A549 (cell line): ENCODE measurements at regions of chr5 and their contacts with region 1.

Region 1: DNA sequence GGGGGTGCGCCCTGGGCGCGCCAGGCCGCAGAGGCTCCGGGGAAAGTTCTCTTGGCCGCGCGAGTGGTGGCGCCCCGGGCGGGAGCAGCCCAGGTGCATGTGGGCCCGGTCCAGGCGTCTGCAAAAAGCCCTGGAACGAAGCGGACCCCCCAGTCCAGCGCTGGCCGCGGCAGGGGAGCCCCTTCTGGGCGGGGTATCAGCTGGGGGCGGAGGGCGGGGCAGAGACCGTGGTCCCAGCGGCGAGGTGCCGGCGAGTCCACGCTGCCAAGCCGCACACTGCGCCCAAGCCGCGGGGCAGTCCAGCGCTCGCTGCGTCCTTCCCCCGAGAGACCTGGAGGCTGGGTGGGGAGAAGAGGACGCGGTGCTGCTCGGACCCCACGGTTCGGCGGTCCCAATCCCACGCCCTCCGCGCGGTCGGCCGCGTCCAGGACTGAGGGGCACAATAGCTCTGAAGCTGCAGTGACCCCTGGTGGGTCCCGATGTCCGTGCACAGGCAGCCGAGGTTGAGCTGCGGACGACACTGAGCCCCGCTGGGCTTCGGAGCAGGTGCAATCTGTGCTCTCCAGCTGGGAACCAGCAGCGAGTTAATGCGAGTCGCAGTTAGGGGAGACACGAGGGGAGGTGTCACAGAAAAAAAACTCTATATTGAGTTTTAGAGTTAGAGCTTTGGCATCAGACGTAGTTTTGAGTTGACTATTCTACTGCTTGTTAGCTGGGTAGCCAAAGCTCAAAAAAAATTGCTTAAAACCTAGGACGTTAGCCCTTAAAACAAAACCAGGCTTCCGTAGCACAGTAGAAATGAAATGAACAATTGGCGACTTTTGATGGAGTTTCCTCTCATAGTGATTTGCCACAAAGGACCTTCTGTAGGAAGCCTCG is 1.1 kb upstream of the EPB41L4A start:
- DNase-seq: peak; percentile 83 to 86
- ATAC-seq: peak; percentile 94 to 97
- H3K4me3 ChIP-seq: peak overlapping the region; percentile 64
- H3K27ac ChIP-seq: peak overlapping the region; percentile 64 to 80
- H3K4me1 ChIP-seq: peaks cover 6% of the 10 kb centered on the region; the same call in 1 of the 3 replicates
- CTCF ChIP-seq: peak; percentile 81
- EP300 ChIP-seq: no peak
- POLR2A ChIP-seq: no peak
- RAD21 ChIP-seq: peak; percentile 84 to 93

Region 2: DNA sequence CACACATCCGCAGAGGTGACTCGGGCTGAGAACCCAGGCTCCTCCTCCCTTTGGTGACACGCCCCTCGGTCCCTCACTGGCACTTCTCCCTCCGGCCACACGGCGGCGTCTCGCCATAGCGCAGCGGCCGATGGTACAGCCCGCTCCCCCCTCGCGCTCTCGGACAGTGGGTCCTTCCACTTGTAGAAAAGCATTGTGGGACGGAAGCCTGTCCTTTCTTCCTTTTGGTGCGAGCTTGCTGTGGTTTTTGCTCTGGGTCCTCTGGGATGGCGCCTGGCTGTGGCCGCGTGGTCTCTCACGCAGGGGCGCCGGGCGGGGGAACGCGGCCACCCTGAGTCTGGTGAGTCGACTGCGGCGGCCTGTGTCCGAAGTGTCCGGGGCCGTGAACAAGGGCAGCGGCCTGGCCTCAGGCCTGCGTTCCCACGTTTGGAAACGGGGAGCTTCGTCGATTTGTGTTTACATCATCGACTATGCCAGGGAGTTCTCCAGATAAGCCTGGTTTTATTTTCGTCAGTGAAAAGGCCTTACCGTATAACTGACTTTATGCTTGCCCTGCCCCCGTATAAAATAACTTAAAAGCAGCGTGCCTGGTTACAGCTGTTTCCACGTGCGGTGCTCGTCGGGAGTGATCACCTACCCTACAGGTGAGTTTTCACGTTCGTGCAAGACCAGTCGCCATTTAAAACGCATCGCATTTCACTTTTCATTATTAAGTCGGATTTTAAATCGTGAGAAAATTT is 259.4 kb before region 1 on chr5:
- CTCF ChIA-PET with region 1: interaction called, 3 read pairs
- POLR2A ChIA-PET with region 1: interaction called, 11 read pairs
- DNase-seq: peak; percentile 68 to 91
- ATAC-seq: peak; percentile 95 to 96
- H3K4me3 ChIP-seq: peak overlapping the region; percentile 95
- H3K27ac ChIP-seq: peak overlapping the region; percentile 82 to 98
- H3K4me1 ChIP-seq: peaks cover 23% of the 10 kb centered on the region
- CTCF ChIP-seq: peak; percentile 79
- EP300 ChIP-seq: no peak
- POLR2A ChIP-seq: peak; percentile 95
- RAD21 ChIP-seq: peak in 1 of 2 experiments; percentile 37; a peak in 2 of 5 replicates

Region 3: GRCh38 chr5:112174959-112175594 is 245.1 kb before region 1 on chr5:
- CTCF ChIA-PET with region 1: interaction called, 84 read pairs
- POLR2A ChIA-PET with region 1: no interaction called
- DNase-seq: peak; percentile 47 to 63
- ATAC-seq: peak; percentile 58 to 89; a peak in 5 of 6 replicates
- H3K4me3 ChIP-seq: no peak overlapping the region
- H3K27ac ChIP-seq: no peak overlapping the region
- H3K4me1 ChIP-seq: 0 out of 3 replicates have a peak, but pooled peaks cover 4% of the 10 kb centered on the region
- CTCF ChIP-seq: peak; percentile 88
- EP300 ChIP-seq: no peak
- POLR2A ChIP-seq: no peak
- RAD21 ChIP-seq: peak; percentile 77 to 79

Region 4: DNA sequence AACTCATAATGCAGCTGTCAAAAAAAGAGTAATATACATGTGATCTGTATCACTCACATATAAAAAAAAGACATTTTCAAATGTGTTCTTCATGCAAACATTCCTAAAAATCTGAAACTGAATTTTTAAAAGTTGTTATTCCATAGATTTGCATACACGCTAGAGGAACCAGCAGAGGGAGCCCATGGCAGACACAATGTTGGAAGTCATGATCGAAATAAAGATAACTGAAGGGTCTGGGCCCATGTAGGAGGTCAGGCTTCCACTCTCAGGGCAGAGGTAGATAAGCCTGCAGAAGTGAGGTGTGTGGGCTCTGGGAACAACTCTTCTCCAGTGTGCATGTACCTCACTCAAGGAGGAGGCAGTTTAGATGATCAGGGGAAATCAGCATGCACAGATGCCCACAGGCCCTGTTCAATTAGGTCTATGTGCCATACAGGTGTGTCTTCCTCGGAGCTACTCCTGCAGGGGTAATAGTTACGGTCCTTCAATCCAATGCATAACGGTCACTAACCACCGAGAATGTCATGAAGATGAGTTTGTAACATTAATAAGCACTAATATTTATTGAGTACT is 209.7 kb before region 1 on chr5:
- CTCF ChIA-PET with region 1: interaction called, 19 read pairs
- POLR2A ChIA-PET with region 1: no interaction called
- DNase-seq: peak; percentile 9 to 66
- ATAC-seq: peak; percentile 70 to 90; a peak in 5 of 6 replicates
- H3K4me3 ChIP-seq: no peak overlapping the region
- H3K27ac ChIP-seq: no peak overlapping the region
- H3K4me1 ChIP-seq: no peaks in the 10 kb centered on the region
- CTCF ChIP-seq: peak; percentile 76
- EP300 ChIP-seq: no peak
- POLR2A ChIP-seq: no peak
- RAD21 ChIP-seq: peak; percentile 80 to 82

Region 5: DNA sequence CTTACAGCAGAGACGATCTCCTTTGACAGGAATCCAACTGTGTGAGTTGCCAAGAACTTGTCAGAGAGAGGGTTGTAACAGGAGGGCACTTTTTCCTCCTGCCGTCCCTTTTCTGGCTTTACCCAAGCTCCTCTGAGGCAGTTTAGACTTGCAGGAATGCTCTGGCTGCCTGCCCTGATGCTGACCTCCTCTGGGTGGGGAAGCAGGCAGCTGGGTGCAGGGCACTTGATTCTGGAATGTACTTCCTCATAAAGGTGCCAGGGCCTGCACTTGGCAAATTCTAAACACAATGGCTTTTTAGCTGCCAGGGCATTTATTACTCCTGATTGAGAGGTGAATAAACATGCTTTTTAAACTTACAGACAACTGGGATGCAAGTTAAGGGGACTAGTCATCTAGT is 191.6 kb before region 1 on chr5:
- CTCF ChIA-PET with region 1: interaction called, 10 read pairs
- POLR2A ChIA-PET with region 1: no interaction called
- DNase-seq: peak; percentile 73 to 90
- ATAC-seq: peak; percentile 97 to 98
- H3K4me3 ChIP-seq: no peak overlapping the region; the same call in 2 of the 3 replicates
- H3K27ac ChIP-seq: peak overlapping the region; percentile 64 to 71
- H3K4me1 ChIP-seq: peaks cover 37% of the 10 kb centered on the region
- CTCF ChIP-seq: no peak
- EP300 ChIP-seq: no peak
- POLR2A ChIP-seq: no peak
- RAD21 ChIP-seq: no peak

Region 6: GRCh38 chr5:112381521-112381920 is 38.7 kb before region 1 on chr5:
- CTCF ChIA-PET with region 1: no interaction called
- POLR2A ChIA-PET with region 1: no interaction called
- DNase-seq: no peak
- ATAC-seq: no peak
- H3K4me3 ChIP-seq: no peak overlapping the region
- H3K27ac ChIP-seq: no peak overlapping the region
- H3K4me1 ChIP-seq: no peaks in the 10 kb centered on the region
- CTCF ChIP-seq: no peak
- EP300 ChIP-seq: no peak
- POLR2A ChIP-seq: no peak
- RAD21 ChIP-seq: no peak

Region 7: GRCh38 chr5:112403069-112403468 is 17.2 kb before region 1 on chr5:
- CTCF ChIA-PET with region 1: interaction called, 10 read pairs
- POLR2A ChIA-PET with region 1: interaction called, 8 read pairs
- DNase-seq: no peak
- ATAC-seq: no peak
- H3K4me3 ChIP-seq: no peak overlapping the region
- H3K27ac ChIP-seq: no peak overlapping the region
- H3K4me1 ChIP-seq: peaks cover 5% of the 10 kb centered on the region; the same call in 2 of the 3 replicates
- CTCF ChIP-seq: no peak
- EP300 ChIP-seq: no peak
- POLR2A ChIP-seq: no peak
- RAD21 ChIP-seq: no peak

Region 8: DNA sequence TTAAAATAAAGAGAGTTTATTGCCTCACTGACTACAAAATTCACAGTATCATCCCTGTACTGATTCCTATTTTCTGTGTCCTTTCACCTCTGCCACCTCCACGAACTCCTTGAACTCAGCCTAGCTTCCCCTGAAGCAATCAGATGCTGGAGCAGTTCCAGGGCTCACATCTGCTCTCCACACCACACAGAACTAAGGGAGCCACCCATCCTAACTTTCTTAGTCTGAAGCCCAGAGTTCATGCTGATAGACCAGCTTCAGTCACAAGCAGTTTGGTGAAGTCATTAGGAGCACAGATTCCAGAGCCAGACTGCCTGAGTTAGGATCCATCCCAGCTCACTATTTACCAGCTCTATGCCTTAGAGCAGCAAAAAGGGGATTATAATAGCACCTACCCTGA is 14.4 kb after region 1 on chr5:
- CTCF ChIA-PET with region 1: interaction called, 26 read pairs
- POLR2A ChIA-PET with region 1: no interaction called
- DNase-seq: no peak
- ATAC-seq: no peak
- H3K4me3 ChIP-seq: no peak overlapping the region
- H3K27ac ChIP-seq: no peak overlapping the region
- H3K4me1 ChIP-seq: no peaks in the 10 kb centered on the region
- CTCF ChIP-seq: no peak
- EP300 ChIP-seq: no peak
- POLR2A ChIP-seq: no peak
- RAD21 ChIP-seq: no peak